Mammary epithelial cell (primary cell): ENCODE measurements at regions of chr7 and their contacts with region 1.

Region 1: DNA sequence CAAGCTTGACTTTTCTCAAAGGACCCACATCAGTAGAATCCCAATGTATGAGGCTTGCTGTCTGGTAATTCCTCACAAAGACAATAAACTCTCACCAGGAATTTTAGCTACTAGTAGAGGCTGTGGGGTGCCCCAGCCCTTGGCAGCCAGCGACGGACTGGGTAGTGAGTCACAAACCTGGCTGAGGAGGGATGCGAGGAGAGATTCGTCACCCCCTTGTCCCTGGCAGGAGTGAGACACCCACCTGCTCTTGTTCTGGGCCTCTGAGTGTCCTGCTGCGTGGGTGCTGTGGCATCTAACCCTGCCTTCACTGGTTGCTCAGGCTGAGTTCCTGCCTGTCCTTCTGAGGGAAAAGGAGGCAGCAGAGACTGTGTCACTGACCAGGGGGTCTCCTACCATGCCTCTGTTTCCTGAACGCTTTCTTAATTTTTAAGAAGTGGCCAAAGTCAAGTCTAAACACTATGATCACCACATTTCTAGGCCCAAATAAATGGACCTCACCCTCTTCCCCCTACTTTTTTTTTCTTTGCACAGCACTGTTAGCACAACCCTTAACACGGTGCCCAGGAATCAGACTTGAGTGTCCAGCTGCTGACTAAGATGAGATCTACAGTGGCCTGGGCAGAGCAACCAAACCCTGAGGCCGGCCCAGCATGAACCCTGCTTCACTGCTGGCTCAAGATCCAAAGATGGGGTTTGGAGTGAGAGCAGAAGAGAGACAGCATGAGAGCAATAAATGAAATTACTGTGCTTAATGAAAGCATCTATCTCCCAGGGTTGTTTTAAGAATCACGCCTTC is 146.4 kb downstream of the ANLN start:
- DNase-seq: peak; percentile 86
- H3K4me3 ChIP-seq: no peak overlapping the region
- H3K27ac ChIP-seq: no peak overlapping the region
- H3K4me1 ChIP-seq: peaks cover 14% of the 10 kb centered on the region
- H3K27me3 ChIP-seq: no peaks in the 10 kb centered on the region
- CTCF ChIP-seq: no peak

Region 2: GRCh38 chr7:36615852-36616540 is 79.9 kb after region 1 on chr7:
- CTCF ChIA-PET with region 1: no interaction called
- dilution Hi-C with region 1: loop called (anchors 5 kb)
- in situ Hi-C with region 1: no loop called
- intact Hi-C with region 1: no loop called
- DNase-seq: no peak
- H3K4me3 ChIP-seq: no peak overlapping the region
- H3K27ac ChIP-seq: no peak overlapping the region
- H3K4me1 ChIP-seq: no peaks in the 10 kb centered on the region
- H3K27me3 ChIP-seq: no peaks in the 10 kb centered on the region
- CTCF ChIP-seq: no peak

Region 3: DNA sequence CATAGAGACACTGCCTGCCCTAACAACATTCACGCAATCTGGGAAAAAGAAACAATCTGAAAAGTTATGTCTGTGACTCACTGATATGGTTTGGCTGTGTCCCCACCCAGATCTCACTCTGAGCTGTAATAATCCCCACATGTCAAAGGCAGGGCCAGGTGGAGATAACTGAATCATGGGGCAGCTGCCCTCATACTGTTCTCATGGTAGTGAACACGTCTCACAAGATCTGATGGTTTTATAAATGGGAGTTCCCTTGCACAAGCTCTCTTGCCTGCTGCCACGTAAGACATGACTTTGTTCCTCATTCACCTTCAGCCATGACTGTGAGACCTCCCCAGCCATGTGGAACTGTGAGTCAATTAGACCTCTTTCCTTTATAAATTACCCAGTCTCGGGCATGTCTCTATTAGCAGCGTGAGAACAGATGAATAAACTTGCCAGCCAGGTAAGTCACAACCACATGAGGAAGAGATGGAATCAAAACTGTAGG is 529.8 kb after region 1 on chr7:
- CTCF ChIA-PET with region 1: no interaction called
- dilution Hi-C with region 1: no loop called
- in situ Hi-C with region 1: no loop called
- intact Hi-C with region 1: no loop called
- DNase-seq: peak; percentile 72
- H3K4me3 ChIP-seq: no peak overlapping the region
- H3K27ac ChIP-seq: no peak overlapping the region
- H3K4me1 ChIP-seq: no peaks in the 10 kb centered on the region
- H3K27me3 ChIP-seq: no peaks in the 10 kb centered on the region
- CTCF ChIP-seq: no peak